ENCODE measurements at regions of chr13 and their contacts with region 1.

Region 1: GRCh38 chr13:80037505-80037888 is 303.4 kb downstream of the SPRY2 start:
- DNase-seq: no peak
- CTCF ChIP-seq: no peak

Region 2: GRCh38 chr13:79581870-79582315 is 455.6 kb before region 1 on chr13:
- CTCF ChIA-PET with region 1: no interaction called
- POLR2A ChIA-PET with region 1: no interaction called
- DNase-seq: no peak
- CTCF ChIP-seq: no peak

Region 3: GRCh38 chr13:80048802-80049201 is 11.3 kb after region 1 on chr13:
- CTCF ChIA-PET with region 1: interaction called, 12 read pairs
- POLR2A ChIA-PET with region 1: no interaction called
- DNase-seq: peak; percentile 56
- CTCF ChIP-seq: no peak